Right lobe of liver (tissue), 6 donors: ENCODE measurements at regions of chr12 and their contacts with region 1.

Region 1: GRCh38 chr12:32755654-32756475 is at the start of gene YARS2:
- DNase-seq: peak; percentile 93 to 96 (median 95)
- ATAC-seq: peak; percentile 97 to 99 (median 98)
- H3K4me3 ChIP-seq: peak within 1 kb of the TSS; percentile 88 to 100 (median 92)
- H3K27ac ChIP-seq: peak within 1 kb of the TSS; percentile 81 to 83 (median 81)
- H3K4me1 ChIP-seq: peaks cover 0 to 10% (median 3%) of the 10 kb centered on the region in 4 donors
- H3K27me3 ChIP-seq: no peaks in the 10 kb centered on the region
- CTCF ChIP-seq: peak; percentile 75 to 89 (median 82)
- POLR2A ChIP-seq: peak; percentile 74
- total RNA-seq, gene YARS2: 6.9 to 19.4 (median 9.0) TPM

Region 2: GRCh38 chr12:32431025-32431424 is 324.8 kb before region 1 on chr12:
- intact Hi-C with region 1: no loop called
- DNase-seq: no peak
- ATAC-seq: no peak
- H3K4me3 ChIP-seq: no peak overlapping the region
- H3K27ac ChIP-seq: no peak overlapping the region
- H3K4me1 ChIP-seq: no peaks in the 10 kb centered on the region
- H3K27me3 ChIP-seq: no peaks in the 10 kb centered on the region
- CTCF ChIP-seq: no peak
- POLR2A ChIP-seq: no peak

Region 3: GRCh38 chr12:32920280-32921089 is 164.6 kb after region 1 on chr12:
- intact Hi-C with region 1: loop called in 1 of 2 experiments (anchors 5 kb)
- DNase-seq: no peak
- ATAC-seq: no peak
- H3K4me3 ChIP-seq: no peak overlapping the region
- H3K27ac ChIP-seq: no peak overlapping the region
- H3K4me1 ChIP-seq: no peaks in the 10 kb centered on the region
- H3K27me3 ChIP-seq: no peaks in the 10 kb centered on the region
- CTCF ChIP-seq: no peak
- POLR2A ChIP-seq: no peak